ENCODE measurements at regions of chr14 and their contacts with region 1.

Region 1: GRCh38 chr14:91573893-91574837 is 64.1 kb upstream of the PPP4R3A start:
- DNase-seq: peak; percentile 96
- H3K4me3 Mint-ChIP-seq: peak overlapping the region; percentile 74
- H3K27ac Mint-ChIP-seq: no peak overlapping the region
- H3K4me1 Mint-ChIP-seq: peaks cover 13% of the 10 kb centered on the region
- H3K27me3 Mint-ChIP-seq: no peaks in the 10 kb centered on the region

Region 2: DNA sequence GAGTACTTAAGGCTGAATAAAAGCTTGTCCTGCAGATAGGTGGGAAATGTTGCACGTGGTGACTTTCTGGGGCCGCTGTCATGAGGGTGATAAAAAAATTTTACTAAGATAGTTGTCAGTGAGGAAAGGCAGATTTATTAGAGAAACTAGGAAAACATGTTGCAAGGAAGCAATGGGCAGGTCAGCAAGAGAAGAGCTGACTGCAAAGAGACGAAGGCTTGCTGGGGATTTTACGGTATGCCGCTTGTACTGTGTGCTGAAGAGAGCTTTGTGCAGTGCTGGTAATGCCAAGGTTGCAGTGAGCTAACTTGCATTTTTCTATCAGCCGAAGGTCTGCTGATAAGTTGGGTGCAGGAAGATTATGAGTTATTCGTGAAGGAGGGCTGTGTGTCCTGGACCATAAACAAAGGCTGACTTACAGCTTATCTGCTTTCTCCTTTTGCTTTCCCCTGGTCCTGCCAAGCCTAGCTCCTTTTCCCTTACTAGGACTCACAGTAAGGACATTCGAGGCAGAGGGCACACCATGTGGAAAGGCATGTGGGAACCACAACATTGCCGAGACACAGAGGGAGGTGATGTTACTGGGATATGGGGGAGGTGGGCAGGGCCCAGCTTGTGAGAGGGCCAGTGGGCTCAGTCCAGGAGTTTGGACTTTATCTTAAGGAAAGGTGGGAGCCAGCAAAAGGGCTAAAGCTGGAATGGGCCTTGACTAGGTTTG is 149.2 kb before region 1 on chr14:
- CTCF ChIA-PET with region 1: interaction called, 5 read pairs
- intact Hi-C with region 1: loop called (anchors 1 kb)
- DNase-seq: no peak
- H3K4me3 Mint-ChIP-seq: no peak overlapping the region
- H3K27ac Mint-ChIP-seq: no peak overlapping the region
- H3K4me1 Mint-ChIP-seq: peaks cover 12% of the 10 kb centered on the region
- H3K27me3 Mint-ChIP-seq: no peaks in the 10 kb centered on the region

Measured in activated naive CD4-positive, alpha-beta T cell treated with anti-CD3 and anti-CD28 coated beads for 36 hours (primary cell).